ENCODE measurements at regions of chr2 and their contacts with region 1.

Region 1: DNA sequence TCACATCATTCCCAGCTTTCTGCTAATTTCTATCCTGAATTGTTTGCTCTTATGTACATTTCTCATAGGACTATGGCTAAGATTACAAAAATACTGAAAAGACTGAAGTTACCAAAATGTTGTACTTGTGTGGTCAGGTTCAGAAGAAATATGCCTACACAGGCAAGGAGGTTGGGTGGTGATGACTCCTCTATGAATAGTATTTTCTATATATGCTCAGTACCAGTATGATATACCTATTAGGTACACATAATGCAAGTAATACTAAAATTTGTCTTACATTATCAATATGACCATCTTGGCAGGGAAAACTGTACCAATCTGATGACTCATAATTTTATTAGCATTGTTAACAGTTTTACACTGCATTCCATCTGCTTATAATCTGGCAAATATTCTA is 12.2 kb upstream of the ORC2 start:
- DNase-seq: no peak
- ATAC-seq: no peak
- H3K4me3 ChIP-seq: no peak overlapping the region
- H3K4me3 Mint-ChIP-seq: no peak overlapping the region
- H3K27ac ChIP-seq: no peak overlapping the region
- H3K27ac Mint-ChIP-seq: peak overlapping the region in 1 of 2 donors; percentile 71
- H3K4me1 ChIP-seq: no peaks in the 10 kb centered on the region
- H3K4me1 Mint-ChIP-seq: no peaks in the 10 kb centered on the region
- H3K27me3 ChIP-seq: no peaks in the 10 kb centered on the region
- H3K27me3 Mint-ChIP-seq: no peaks in the 10 kb centered on the region

Region 2: GRCh38 chr2:201021914-201022313 is 46.2 kb after region 1 on chr2:
- CTCF ChIA-PET with region 1: no interaction called
- POLR2A ChIA-PET with region 1: no interaction called
- DNase-seq: no peak
- ATAC-seq: no peak
- H3K4me3 ChIP-seq: no peak overlapping the region
- H3K4me3 Mint-ChIP-seq: no peak overlapping the region
- H3K27ac ChIP-seq: no peak overlapping the region
- H3K27ac Mint-ChIP-seq: peak overlapping the region; percentile 24 to 53
- H3K4me1 ChIP-seq: no peaks in the 10 kb centered on the region
- H3K4me1 Mint-ChIP-seq: peaks cover 23 to 28% (median 26%) of the 10 kb centered on the region in 3 donors
- H3K27me3 ChIP-seq: no peaks in the 10 kb centered on the region
- H3K27me3 Mint-ChIP-seq: no peaks in the 10 kb centered on the region

Region 3: DNA sequence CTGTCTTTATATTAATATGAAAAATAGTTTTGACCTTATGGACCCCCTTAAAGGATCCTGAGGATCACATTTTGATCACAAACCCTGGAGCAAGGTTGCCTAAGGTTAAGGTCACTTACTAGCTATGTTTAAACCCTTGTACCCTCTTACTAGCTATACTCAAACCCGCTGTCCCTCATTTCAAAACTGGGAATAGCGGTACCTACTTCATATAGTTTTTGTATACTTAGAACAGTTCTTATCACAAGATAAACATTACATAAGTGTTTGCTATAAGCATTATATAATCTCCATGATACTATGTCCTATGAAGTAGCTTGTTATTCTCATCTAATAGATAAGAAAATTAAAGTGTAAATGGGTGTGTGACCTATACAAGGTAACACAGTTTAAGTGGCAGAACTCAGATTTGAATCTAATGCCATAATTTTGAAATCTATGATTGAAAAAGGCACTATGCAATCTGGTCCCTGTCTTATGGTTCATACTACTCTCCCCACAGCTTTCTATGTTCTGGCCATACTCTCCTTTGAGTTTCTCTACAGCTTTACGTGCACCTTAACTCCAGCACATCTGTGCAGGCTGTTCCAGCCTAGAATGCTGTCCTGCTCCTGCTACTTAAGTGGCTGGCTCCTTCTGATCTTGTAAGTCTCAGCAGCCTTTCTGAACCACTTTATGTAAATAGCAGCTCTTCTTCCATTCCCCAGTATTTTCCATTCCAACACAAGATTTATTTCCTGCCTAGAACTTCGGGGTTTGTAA is 65.4 kb after region 1 on chr2:
- CTCF ChIA-PET with region 1: no interaction called
- POLR2A ChIA-PET with region 1: interaction called, 4 to 12 read pairs
- DNase-seq: no peak
- ATAC-seq: no peak
- H3K4me3 ChIP-seq: no peak overlapping the region
- H3K4me3 Mint-ChIP-seq: no peak overlapping the region
- H3K27ac ChIP-seq: no peak overlapping the region
- H3K27ac Mint-ChIP-seq: peak overlapping the region in 1 of 2 donors; percentile 8
- H3K4me1 ChIP-seq: no peaks in the 10 kb centered on the region
- H3K4me1 Mint-ChIP-seq: peaks cover 3 to 10% (median 3%) of the 10 kb centered on the region in 3 donors
- H3K27me3 ChIP-seq: no peaks in the 10 kb centered on the region
- H3K27me3 Mint-ChIP-seq: no peaks in the 10 kb centered on the region

Region 4: DNA sequence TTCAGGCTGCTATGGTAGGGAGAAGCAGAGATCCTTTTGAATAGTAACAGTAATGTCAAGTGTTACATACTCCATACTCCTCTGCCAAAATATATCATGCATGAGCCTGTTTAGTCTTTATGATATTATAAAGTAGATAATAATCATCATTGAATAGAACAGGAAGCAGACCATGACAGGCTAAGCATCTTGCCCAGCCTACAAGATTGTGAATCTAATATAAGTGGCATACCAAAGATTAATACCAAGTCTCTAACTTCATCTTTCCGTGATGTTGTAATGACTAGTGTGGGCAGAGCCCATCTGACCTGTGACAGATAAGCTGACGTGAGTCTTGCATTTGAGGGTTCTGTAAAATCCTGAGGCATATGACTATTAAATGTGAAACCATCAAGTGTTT is 109.2 kb after region 1 on chr2:
- CTCF ChIA-PET with region 1: no interaction called
- POLR2A ChIA-PET with region 1: interaction called in 1 of 2 experiments, 11 read pairs
- DNase-seq: no peak
- ATAC-seq: no peak
- H3K4me3 ChIP-seq: no peak overlapping the region
- H3K4me3 Mint-ChIP-seq: no peak overlapping the region
- H3K27ac ChIP-seq: no peak overlapping the region
- H3K27ac Mint-ChIP-seq: peak overlapping the region in 1 of 2 donors; percentile 13
- H3K4me1 ChIP-seq: no peaks in the 10 kb centered on the region
- H3K4me1 Mint-ChIP-seq: peaks cover 0 to 7% (median 3%) of the 10 kb centered on the region in 3 donors
- H3K27me3 ChIP-seq: no peaks in the 10 kb centered on the region
- H3K27me3 Mint-ChIP-seq: no peaks in the 10 kb centered on the region